Spleen (tissue), 13 donors: ENCODE measurements at regions of chr2 and their contacts with region 1.

Region 1: GRCh38 chr2:194166818-194167217 is 1490.2 kb upstream of the SLC39A10 start:
- DNase-seq: no peak
- H3K4me3 ChIP-seq: no peak overlapping the region
- H3K27ac ChIP-seq: no peak overlapping the region
- H3K4me1 ChIP-seq: no peaks in the 10 kb centered on the region
- H3K27me3 ChIP-seq: no peaks in the 10 kb centered on the region
- CTCF ChIP-seq: peak in 7 of 11 experiments; percentile 8 to 44 (median 33)
- POLR2A ChIP-seq: no peak

Region 2: GRCh38 chr2:194020155-194020554 is 146.7 kb before region 1 on chr2:
- intact Hi-C with region 1: no loop called
- DNase-seq: no peak
- H3K4me3 ChIP-seq: no peak overlapping the region
- H3K27ac ChIP-seq: no peak overlapping the region
- H3K4me1 ChIP-seq: no peaks in the 10 kb centered on the region
- H3K27me3 ChIP-seq: no peaks in the 10 kb centered on the region
- CTCF ChIP-seq: no peak
- POLR2A ChIP-seq: no peak

Region 3: GRCh38 chr2:195318440-195319111 is 1151.8 kb after region 1 on chr2:
- intact Hi-C with region 1: loop called (anchors 10 kb)
- DNase-seq: no peak
- H3K4me3 ChIP-seq: no peak overlapping the region
- H3K27ac ChIP-seq: no peak overlapping the region
- H3K4me1 ChIP-seq: peaks cover 0 to 8% (median 0%) of the 10 kb centered on the region in 6 donors
- H3K27me3 ChIP-seq: no peaks in the 10 kb centered on the region
- CTCF ChIP-seq: peak; percentile 16 to 70 (median 35)
- POLR2A ChIP-seq: no peak